Naive thymus-derived CD4-positive, alpha-beta T cell (primary cell): ENCODE measurements at regions of chr3 and their contacts with region 1.

Region 1: GRCh38 chr3:43296565-43296964 is 10.2 kb downstream of the SNRK start:
- DNase-seq: peak in 8 of 9 donors; percentile 51 to 93 (median 86)
- ATAC-seq: peak; percentile 95
- H3K4me3 ChIP-seq: peak overlapping the region; percentile 53
- H3K4me3 Mint-ChIP-seq: peak overlapping the region; percentile 81 to 99 (median 87)
- H3K27ac ChIP-seq: peak overlapping the region; percentile 89
- H3K27ac Mint-ChIP-seq: peak overlapping the region; percentile 92 to 99 (median 96)
- H3K4me1 ChIP-seq: peaks cover 76 to 78% of the 10 kb centered on the region in 2 donors
- H3K4me1 Mint-ChIP-seq: peaks cover 46 to 97% (median 83%) of the 10 kb centered on the region in 7 donors
- H3K27me3 ChIP-seq: no peaks in the 10 kb centered on the region
- H3K27me3 Mint-ChIP-seq: no peaks in the 10 kb centered on the region

Region 2: DNA sequence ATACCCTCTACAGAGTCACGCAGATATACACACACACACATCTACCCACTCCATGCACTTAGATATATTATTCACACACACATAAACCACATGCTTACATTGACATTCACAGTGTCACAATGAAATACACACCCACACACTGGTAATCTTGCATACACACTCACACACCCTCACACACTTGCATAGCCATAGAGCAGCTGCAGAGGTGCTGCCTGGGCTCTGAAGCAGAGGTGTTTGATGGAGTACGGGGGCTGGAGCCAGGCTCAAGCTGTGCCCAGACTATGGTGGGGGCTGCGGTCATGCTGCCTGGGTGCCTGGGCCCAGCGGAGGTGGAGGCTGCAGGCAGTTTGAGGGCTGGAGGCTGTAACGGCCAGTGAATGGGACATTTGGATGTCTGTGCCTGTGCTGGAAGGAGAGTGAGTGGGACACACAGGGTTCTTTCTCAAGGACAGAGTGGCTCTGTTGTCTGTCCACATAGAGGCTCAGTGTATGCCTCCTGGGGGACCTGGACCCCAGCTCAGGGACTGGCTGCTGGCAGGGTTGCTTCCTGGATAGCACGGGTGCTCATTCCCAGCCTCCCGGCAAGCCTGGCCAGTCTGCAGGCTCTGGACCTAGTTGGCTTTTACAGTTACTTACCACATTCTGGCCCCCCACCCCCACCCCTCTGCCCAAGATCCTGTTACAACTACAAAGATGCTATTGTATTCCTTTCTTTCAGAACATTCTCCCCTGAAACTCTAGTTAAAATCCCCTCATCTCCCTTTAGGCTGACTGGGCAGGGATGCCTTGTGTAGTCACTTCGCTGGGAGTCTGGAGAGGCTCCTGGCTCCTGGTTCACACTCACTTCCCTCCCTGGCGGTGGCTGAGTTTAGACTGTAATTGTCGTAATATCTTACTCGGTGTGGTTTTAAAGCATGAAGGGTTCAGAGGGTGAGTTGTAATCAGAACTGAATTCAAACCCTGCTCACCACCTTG is 304.9 kb before region 1 on chr3:
- CTCF ChIA-PET with region 1: no interaction called
- POLR2A ChIA-PET with region 1: no interaction called
- intact Hi-C with region 1: no loop called
- DNase-seq: no peak
- ATAC-seq: no peak
- H3K4me3 ChIP-seq: no peak overlapping the region
- H3K4me3 Mint-ChIP-seq: no peak overlapping the region
- H3K27ac ChIP-seq: no peak overlapping the region
- H3K27ac Mint-ChIP-seq: peak overlapping the region in 1 of 9 donors; percentile 23
- H3K4me1 ChIP-seq: no peaks in the 10 kb centered on the region
- H3K4me1 Mint-ChIP-seq: peaks cover 0 to 3% (median 0%) of the 10 kb centered on the region in 7 donors
- H3K27me3 ChIP-seq: no peaks in the 10 kb centered on the region
- H3K27me3 Mint-ChIP-seq: peaks cover 0 to 3% (median 0%) of the 10 kb centered on the region in 5 donors

Region 3: DNA sequence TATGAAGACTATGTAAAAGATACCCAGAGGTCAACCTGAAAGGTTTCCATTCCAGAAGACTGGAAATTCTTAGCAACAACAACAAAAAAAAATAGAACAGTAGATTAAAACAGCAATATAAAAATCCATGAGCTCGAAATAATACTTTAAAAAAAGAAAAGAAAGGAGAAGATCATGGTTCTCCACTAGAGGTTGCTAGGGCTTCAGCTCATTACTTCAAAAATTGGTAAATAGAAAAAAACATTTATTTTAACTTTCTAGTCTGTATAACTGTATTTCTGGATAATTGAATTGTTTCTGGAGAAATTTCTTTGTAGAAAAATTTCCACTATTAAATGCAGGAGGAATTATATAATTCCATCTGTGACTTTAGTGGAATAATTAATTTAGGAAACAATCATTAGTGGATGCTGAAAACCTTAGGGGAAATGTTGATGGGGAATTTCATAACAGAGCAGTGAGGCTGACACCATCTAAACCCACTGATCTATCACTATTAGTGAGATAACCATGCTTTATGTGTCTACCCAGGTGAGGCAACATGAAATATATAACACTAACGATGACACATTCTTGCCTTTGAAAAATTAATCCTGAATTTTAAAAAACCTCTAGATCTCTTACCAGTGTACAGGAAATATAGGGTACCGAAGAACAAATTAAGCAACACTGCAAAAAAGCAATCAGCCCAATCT is 72.7 kb before region 1 on chr3:
- CTCF ChIA-PET with region 1: interaction called, 3 read pairs
- POLR2A ChIA-PET with region 1: interaction called, 10 read pairs
- intact Hi-C with region 1: loop called in 1 of 2 experiments (anchors 5 kb)
- DNase-seq: peak in 4 of 9 donors; percentile 18 to 46 (median 38)
- ATAC-seq: peak; percentile 57
- H3K4me3 ChIP-seq: no peak overlapping the region
- H3K4me3 Mint-ChIP-seq: peak overlapping the region in 6 of 10 donors; percentile 20 to 77 (median 47)
- H3K27ac ChIP-seq: no peak overlapping the region
- H3K27ac Mint-ChIP-seq: peak overlapping the region in 7 of 9 donors; percentile 18 to 93 (median 87)
- H3K4me1 ChIP-seq: peaks cover 13 to 56% of the 10 kb centered on the region in 2 donors
- H3K4me1 Mint-ChIP-seq: peaks cover 25 to 67% (median 63%) of the 10 kb centered on the region in 7 donors
- H3K27me3 ChIP-seq: no peaks in the 10 kb centered on the region
- H3K27me3 Mint-ChIP-seq: no peaks in the 10 kb centered on the region

Region 4: DNA sequence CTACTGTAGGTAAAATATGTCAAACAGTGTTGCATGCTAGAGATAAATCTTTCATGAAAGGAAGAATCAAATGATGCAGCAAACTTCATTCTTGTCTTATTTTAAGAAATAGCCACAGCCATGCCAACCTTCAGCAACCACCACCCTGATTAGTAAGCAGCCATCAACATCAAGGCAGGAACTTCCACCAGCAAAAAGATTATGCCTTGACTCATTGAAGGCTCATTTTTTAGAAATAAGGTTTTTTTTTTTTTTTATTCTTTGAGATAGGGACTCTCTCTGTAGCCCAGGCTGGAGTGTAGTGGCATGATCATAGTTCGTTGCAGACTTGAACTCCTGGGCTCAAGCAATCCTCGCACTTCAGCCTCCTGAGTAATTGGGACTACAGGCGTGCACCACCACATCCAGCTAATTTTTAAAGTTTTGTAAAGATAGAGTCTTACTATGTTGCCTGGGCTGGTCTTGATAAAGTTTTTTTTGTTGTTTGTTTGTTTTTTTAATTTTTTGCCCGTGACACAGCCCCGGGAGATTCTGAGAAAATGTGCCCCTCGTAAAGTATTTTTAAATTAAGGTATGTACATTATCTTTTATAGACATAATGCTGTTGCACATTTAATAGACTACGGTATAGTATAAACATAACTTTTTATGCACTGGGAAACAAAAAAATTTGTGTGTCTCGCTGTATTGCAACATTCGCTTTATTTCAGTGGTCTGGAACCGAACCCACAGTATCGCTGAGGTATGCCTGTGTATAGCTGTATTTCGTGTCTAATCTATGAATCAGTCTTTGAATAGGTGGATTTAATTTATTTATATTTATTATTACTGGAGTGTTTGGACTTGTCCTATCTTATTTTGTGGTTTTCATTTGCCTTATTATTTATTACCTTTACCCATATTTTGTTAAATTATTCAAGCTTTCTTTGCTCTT is 13.1 kb after region 1 on chr3:
- CTCF ChIA-PET with region 1: no interaction called
- POLR2A ChIA-PET with region 1: interaction called, 36 read pairs
- intact Hi-C with region 1: loop called (anchors 1 to 2 kb)
- DNase-seq: no peak
- ATAC-seq: no peak
- H3K4me3 ChIP-seq: no peak overlapping the region
- H3K4me3 Mint-ChIP-seq: peak overlapping the region in 9 of 10 donors; percentile 16 to 73 (median 49)
- H3K27ac ChIP-seq: no peak overlapping the region
- H3K27ac Mint-ChIP-seq: peak overlapping the region in 7 of 9 donors; percentile 1 to 80 (median 65)
- H3K4me1 ChIP-seq: peaks cover 28 to 30% of the 10 kb centered on the region in 2 donors
- H3K4me1 Mint-ChIP-seq: peaks cover 40 to 94% (median 91%) of the 10 kb centered on the region in 7 donors
- H3K27me3 ChIP-seq: no peaks in the 10 kb centered on the region
- H3K27me3 Mint-ChIP-seq: no peaks in the 10 kb centered on the region

Region 5: GRCh38 chr3:43326891-43327581 is 30.5 kb after region 1 on chr3:
- CTCF ChIA-PET with region 1: interaction called, 5 read pairs
- POLR2A ChIA-PET with region 1: interaction called, 20 read pairs
- intact Hi-C with region 1: loop called in 1 of 2 experiments (anchors 5 kb)
- DNase-seq: no peak
- ATAC-seq: peak; percentile 59
- H3K4me3 ChIP-seq: no peak overlapping the region
- H3K4me3 Mint-ChIP-seq: peak overlapping the region; percentile 14 to 68 (median 62)
- H3K27ac ChIP-seq: peak overlapping the region; percentile 51
- H3K27ac Mint-ChIP-seq: peak overlapping the region; percentile 51 to 91 (median 79)
- H3K4me1 ChIP-seq: peaks cover 40% of the 10 kb centered on the region in 2 donors
- H3K4me1 Mint-ChIP-seq: peaks cover 43 to 97% (median 92%) of the 10 kb centered on the region in 7 donors
- H3K27me3 ChIP-seq: no peaks in the 10 kb centered on the region
- H3K27me3 Mint-ChIP-seq: no peaks in the 10 kb centered on the region

Region 6: DNA sequence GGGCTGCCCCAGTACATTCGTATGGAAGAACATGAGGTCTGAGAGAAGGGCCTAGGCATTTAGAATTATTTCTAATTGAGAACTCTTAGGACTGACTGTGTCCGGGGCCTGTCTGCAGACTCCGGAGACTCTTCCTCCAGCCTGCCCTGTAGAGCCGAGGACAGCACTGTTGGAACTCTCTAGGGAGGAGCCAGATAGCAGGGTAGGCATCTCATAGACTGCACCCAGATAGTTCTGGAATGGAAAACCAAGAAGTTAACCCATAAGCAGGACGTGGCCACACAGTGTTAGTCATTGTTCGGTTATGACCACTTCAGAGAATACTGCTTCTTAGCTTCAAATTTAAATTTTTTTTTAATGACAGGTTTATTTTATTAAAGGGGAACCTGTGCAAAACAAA is 49.3 kb after region 1 on chr3:
- CTCF ChIA-PET with region 1: interaction called, 4 read pairs
- POLR2A ChIA-PET with region 1: interaction called, 22 read pairs
- intact Hi-C with region 1: loop called (anchors 1 to 2 kb)
- DNase-seq: no peak
- ATAC-seq: no peak
- H3K4me3 ChIP-seq: no peak overlapping the region
- H3K4me3 Mint-ChIP-seq: peak overlapping the region in 9 of 10 donors; percentile 18 to 73 (median 64)
- H3K27ac ChIP-seq: peak overlapping the region; percentile 48
- H3K27ac Mint-ChIP-seq: peak overlapping the region; percentile 88 to 96 (median 92)
- H3K4me1 ChIP-seq: peaks cover 68 to 83% of the 10 kb centered on the region in 2 donors
- H3K4me1 Mint-ChIP-seq: peaks cover 41 to 85% (median 74%) of the 10 kb centered on the region in 7 donors
- H3K27me3 ChIP-seq: no peaks in the 10 kb centered on the region
- H3K27me3 Mint-ChIP-seq: no peaks in the 10 kb centered on the region

Region 7: GRCh38 chr3:43503067-43503728 is 206.6 kb after region 1 on chr3:
- CTCF ChIA-PET with region 1: interaction called, 6 read pairs
- POLR2A ChIA-PET with region 1: interaction called, 10 read pairs
- intact Hi-C with region 1: no loop called
- DNase-seq: peak in 6 of 9 donors; percentile 39 to 68 (median 59)
- ATAC-seq: peak; percentile 68
- H3K4me3 ChIP-seq: no peak overlapping the region
- H3K4me3 Mint-ChIP-seq: no peak overlapping the region
- H3K27ac ChIP-seq: no peak overlapping the region
- H3K27ac Mint-ChIP-seq: peak overlapping the region in 4 of 9 donors; percentile 2 to 49 (median 24)
- H3K4me1 ChIP-seq: peaks cover 17 to 18% of the 10 kb centered on the region in 2 donors
- H3K4me1 Mint-ChIP-seq: peaks cover 18 to 51% (median 48%) of the 10 kb centered on the region in 7 donors
- H3K27me3 ChIP-seq: no peaks in the 10 kb centered on the region
- H3K27me3 Mint-ChIP-seq: peaks cover 0 to 8% (median 0%) of the 10 kb centered on the region in 5 donors